CD14-positive monocyte (primary cell): ENCODE measurements at regions of chr1 and their contacts with region 1.

Region 1: GRCh38 chr1:45550401-45551351 is at the start of gene AKR1A1:
- DNase-seq: peak; percentile 81 to 86 (median 85)
- H3K4me3 ChIP-seq: peak within 1 kb of the TSS; percentile 81 to 95 (median 89)
- H3K4me3 Mint-ChIP-seq: peak within 1 kb of the TSS; percentile 97 to 100
- H3K27ac ChIP-seq: peak within 1 kb of the TSS; percentile 88 to 95
- H3K27ac Mint-ChIP-seq: peak within 1 kb of the TSS; percentile 94 to 99 (median 98)
- H3K4me1 ChIP-seq: peaks cover 23 to 33% of the 10 kb centered on the region in 2 donors
- H3K4me1 Mint-ChIP-seq: peaks cover 22% of the 10 kb centered on the region
- H3K27me3 ChIP-seq: no peaks in the 10 kb centered on the region
- H3K27me3 Mint-ChIP-seq: peaks cover 3 to 8% (median 6%) of the 10 kb centered on the region in 3 donors
- CTCF ChIP-seq: no peak
- polyA plus RNA-seq, gene AKR1A1: 219 to 245 (median 219) TPM

Region 2: GRCh38 chr1:45521398-45522323 is 29.0 kb before region 1 on chr1 and contains the start of gene PRDX1:
- intact Hi-C with region 1: loop called in 1 of 2 experiments (anchors 1 kb)
- DNase-seq: peak; percentile 90 to 96 (median 95)
- H3K4me3 ChIP-seq: peak within 1 kb of the TSS; percentile 68 to 92 (median 71)
- H3K4me3 Mint-ChIP-seq: peak within 1 kb of the TSS; percentile 91 to 96
- H3K27ac ChIP-seq: peak within 1 kb of the TSS; percentile 87 to 89
- H3K27ac Mint-ChIP-seq: peak within 1 kb of the TSS; percentile 94 to 99 (median 96)
- H3K4me1 ChIP-seq: peaks cover 19 to 28% of the 10 kb centered on the region in 2 donors
- H3K4me1 Mint-ChIP-seq: peaks cover 35% of the 10 kb centered on the region
- H3K27me3 ChIP-seq: no peaks in the 10 kb centered on the region
- H3K27me3 Mint-ChIP-seq: peaks cover 1 to 12% (median 4%) of the 10 kb centered on the region in 3 donors
- CTCF ChIP-seq: no peak
- polyA plus RNA-seq, gene PRDX1: 116 to 362 (median 294) TPM

Region 3: GRCh38 chr1:45654540-45655280 is 104.0 kb after region 1 on chr1:
- intact Hi-C with region 1: no loop called
- DNase-seq: no peak
- H3K4me3 ChIP-seq: no peak overlapping the region
- H3K4me3 Mint-ChIP-seq: no peak overlapping the region
- H3K27ac ChIP-seq: peak overlapping the region in 1 of 2 donors; percentile 6
- H3K27ac Mint-ChIP-seq: peak overlapping the region in 1 of 7 donors; percentile 78
- H3K4me1 ChIP-seq: no peaks in the 10 kb centered on the region
- H3K4me1 Mint-ChIP-seq: no peaks in the 10 kb centered on the region
- H3K27me3 ChIP-seq: no peaks in the 10 kb centered on the region
- H3K27me3 Mint-ChIP-seq: no peaks in the 10 kb centered on the region
- CTCF ChIP-seq: no peak